SK-N-SH (cell line): ENCODE measurements at regions of chr12 and their contacts with region 1.

Region 1: GRCh38 chr12:112992541-112993398 is 14.5 kb downstream of the OAS2 start:
- DNase-seq: peak; percentile 70
- H3K4me3 ChIP-seq: peak overlapping the region in 1 of 2 experiments; percentile 54; a peak in 1 of 4 replicates
- H3K27ac ChIP-seq: no peak overlapping the region
- H3K4me1 ChIP-seq: no peaks in the 10 kb centered on the region
- H3K27me3 ChIP-seq: no peaks in the 10 kb centered on the region
- CTCF ChIP-seq: peak; percentile 85
- EP300 ChIP-seq: no peak
- RAD21 ChIP-seq: peak; percentile 81

Region 2: DNA sequence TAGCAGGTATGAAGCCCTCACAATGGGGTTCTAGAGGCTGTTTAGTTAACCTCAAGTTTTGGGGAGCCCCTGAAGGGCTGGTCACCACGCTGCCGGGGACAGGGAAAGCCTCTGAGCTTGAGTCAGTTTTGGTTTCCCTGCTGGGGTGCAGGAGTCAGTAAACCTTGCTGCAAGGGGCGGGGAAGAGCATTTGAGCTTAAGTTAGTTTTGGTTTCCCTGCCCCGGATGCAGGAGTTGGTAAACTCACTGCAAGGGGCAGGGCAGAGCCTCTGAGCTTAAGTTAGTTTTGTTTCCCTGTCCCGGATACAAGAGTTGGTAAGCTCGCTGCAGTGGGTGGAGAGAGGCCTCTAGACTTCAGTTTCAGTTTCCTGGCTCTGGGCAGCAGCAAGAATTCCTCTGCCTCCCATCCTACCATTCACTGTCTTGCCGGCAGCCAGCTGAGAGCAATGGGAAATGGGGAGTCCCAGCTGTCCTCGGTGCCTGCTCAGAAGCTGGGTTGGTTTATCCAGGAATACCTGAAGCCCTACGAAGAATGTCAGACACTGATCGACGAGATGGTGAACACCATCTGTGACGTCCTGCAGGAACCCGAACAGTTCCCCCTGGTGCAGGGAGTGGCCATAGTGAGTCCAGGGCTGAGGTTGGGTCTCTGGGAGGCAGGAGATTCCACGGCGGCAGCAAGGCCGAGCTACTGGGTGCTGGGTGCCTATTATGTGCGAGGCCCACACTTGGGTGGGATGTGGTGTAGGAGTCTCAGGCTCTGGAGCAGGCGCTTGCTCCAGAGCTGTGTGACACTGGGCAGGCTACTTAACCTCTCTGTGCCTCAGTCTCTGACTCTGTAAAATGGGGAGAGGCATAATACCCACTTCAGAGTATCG is 14.4 kb before region 1 on chr12 and contains the start of gene OAS2:
- CTCF ChIA-PET with region 1: interaction called, 17 read pairs
- POLR2A ChIA-PET with region 1: no interaction called
- DNase-seq: no peak
- H3K4me3 ChIP-seq: no peak within 1 kb of the TSS
- H3K27ac ChIP-seq: no peak within 1 kb of the TSS
- H3K4me1 ChIP-seq: peaks cover 0 to 6% of the 10 kb centered on the region in 2 experiments; a peak in 1 of 4 replicates
- H3K27me3 ChIP-seq: no peaks in the 10 kb centered on the region
- CTCF ChIP-seq: no peak
- EP300 ChIP-seq: no peak
- RAD21 ChIP-seq: no peak
- polyA plus RNA-seq, gene OAS2: 0.02 TPM in 1 of 2 replicates, not detected in the other

Region 3: DNA sequence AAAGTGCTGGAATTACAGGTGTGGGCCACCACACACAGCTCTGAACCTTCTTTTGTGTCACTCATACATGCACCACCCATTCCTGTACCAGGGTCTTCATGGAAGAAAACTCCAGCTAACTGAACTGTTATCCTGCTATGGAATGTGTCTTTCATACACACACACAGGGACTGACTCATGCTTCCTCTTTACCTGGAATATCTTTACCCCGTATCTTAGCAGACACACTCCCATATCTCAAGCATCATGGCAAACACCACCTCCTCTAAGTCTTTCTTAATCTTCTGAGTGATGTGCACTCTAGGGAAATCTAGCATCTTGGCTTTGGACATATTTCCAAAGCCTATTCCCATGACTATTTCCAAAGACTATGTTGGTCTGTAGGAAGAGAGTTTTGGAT is 28.7 kb after region 1 on chr12:
- CTCF ChIA-PET with region 1: interaction called, 11 read pairs
- POLR2A ChIA-PET with region 1: no interaction called
- DNase-seq: no peak
- H3K4me3 ChIP-seq: no peak overlapping the region
- H3K27ac ChIP-seq: no peak overlapping the region
- H3K4me1 ChIP-seq: no peaks in the 10 kb centered on the region
- H3K27me3 ChIP-seq: no peaks in the 10 kb centered on the region
- CTCF ChIP-seq: no peak
- EP300 ChIP-seq: no peak
- RAD21 ChIP-seq: no peak

Region 4: DNA sequence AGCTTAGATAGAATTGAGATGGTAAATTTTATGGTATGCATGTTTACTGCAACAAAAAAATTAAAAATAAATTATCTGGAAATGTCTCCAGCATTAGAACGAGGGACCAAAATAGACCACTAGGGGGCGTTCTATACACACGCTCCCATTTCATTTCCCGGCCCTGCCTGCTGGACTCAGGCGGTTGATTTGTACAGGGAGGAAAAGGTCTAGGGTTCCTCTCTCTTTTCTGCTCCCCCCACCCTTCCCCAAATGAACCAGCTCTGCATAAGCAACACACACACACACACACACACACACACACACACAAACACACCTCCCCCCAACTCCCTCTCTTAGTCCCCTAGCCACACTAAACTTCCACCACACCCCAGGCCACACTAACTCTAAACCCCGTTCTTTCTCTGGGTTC is 56.0 kb after region 1 on chr12:
- CTCF ChIA-PET with region 1: interaction called, 16 read pairs
- POLR2A ChIA-PET with region 1: no interaction called
- DNase-seq: peak; percentile 81
- H3K4me3 ChIP-seq: no peak overlapping the region; a peak in 1 of 4 replicates
- H3K27ac ChIP-seq: no peak overlapping the region
- H3K4me1 ChIP-seq: no peaks in the 10 kb centered on the region
- H3K27me3 ChIP-seq: 0 out of 2 replicates have a peak, but pooled peaks cover 7% of the 10 kb centered on the region
- CTCF ChIP-seq: peak; percentile 91
- EP300 ChIP-seq: no peak
- RAD21 ChIP-seq: peak; percentile 91